Uterus (tissue), 4 donors: ENCODE measurements at regions of chr19 and their contacts with region 1.

Region 1: GRCh38 chr19:11050323-11051114 is 38.7 kb upstream of the LDLR start:
- DNase-seq: no peak
- H3K4me3 ChIP-seq: no peak overlapping the region
- H3K27ac ChIP-seq: no peak overlapping the region
- H3K4me1 ChIP-seq: no peaks in the 10 kb centered on the region
- H3K27me3 ChIP-seq: no peaks in the 10 kb centered on the region
- CTCF ChIP-seq: no peak
- POLR2A ChIP-seq: no peak

Region 2: DNA sequence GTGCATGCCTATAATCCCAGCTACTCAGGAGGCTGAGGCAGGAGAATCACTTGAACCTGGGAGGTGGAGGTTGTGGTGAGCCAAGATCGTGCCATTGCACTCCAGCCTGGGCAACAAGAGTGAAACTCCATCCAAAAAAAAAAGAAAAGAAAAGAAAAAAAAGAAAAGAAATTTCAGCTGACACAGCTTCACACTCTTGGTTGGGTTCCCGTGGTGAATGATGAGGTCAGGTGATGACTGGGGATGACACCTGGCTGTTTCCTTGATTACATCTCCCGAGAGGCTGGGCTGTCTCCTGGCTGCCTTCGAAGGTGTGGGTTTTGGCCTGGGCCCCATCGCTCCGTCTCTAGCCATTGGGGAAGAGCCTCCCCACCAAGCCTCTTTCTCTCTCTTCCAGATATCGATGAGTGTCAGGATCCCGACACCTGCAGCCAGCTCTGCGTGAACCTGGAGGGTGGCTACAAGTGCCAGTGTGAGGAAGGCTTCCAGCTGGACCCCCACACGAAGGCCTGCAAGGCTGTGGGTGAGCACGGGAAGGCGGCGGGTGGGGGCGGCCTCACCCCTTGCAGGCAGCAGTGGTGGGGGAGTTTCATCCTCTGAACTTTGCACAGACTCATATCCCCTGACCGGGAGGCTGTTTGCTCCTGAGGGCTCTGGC is 60.7 kb after region 1 on chr19:
- intact Hi-C with region 1: loop called (anchors 5 kb)
- DNase-seq: no peak
- H3K4me3 ChIP-seq: no peak overlapping the region
- H3K27ac ChIP-seq: no peak overlapping the region
- H3K4me1 ChIP-seq: no peaks in the 10 kb centered on the region
- H3K27me3 ChIP-seq: no peaks in the 10 kb centered on the region
- CTCF ChIP-seq: no peak
- POLR2A ChIP-seq: no peak